GM10248 (cell line): ENCODE measurements at regions of chr6 and their contacts with region 1.

Region 1: GRCh38 chr6:42771741-42772100 is 10.1 kb upstream of the BICRAL start:
- DNase-seq: no peak
- CTCF ChIP-seq: no peak

Region 2: DNA sequence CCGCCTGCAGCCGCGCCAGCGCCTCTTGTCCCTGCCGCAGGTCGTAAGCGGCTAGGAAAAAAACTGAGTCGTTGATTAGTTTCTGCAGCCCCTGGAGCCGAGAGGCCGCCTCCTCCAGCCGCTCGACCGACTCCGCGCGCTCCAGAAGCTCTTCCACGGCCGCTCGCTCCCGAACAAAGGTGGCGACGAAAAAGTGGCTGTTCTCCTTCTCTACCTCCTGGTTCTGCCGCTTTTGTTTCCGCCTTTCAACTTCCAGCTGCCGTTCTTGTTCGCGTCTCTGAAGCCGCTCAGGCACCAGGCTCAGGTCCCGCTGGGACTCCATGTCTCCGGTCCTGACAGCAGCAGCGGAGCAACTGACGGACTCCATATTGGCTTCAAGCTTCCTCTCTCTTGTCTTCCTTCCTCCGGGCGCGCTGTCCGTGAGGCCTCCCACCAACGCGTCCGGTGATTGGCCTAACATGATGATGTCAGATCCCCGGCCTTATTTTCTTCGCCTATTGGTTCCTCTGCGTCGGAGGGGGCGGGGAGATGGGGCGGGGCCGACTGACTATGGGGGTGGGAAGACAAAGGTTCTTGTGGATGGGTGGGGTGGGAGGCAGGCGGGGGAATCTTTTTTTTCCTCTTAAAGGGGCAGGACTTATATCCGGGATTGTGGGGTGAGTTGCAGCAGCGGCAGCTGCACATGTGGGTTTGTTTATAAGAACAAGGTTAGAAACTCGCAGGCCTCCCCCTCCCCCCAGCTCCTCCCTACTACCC is 25.8 kb before region 1 on chr6 and contains the start of gene TBCC:
- CTCF ChIA-PET with region 1: interaction called, 26 read pairs
- POLR2A ChIA-PET with region 1: interaction called, 22 read pairs
- DNase-seq: peak; percentile 98
- CTCF ChIP-seq: no peak

Region 3: DNA sequence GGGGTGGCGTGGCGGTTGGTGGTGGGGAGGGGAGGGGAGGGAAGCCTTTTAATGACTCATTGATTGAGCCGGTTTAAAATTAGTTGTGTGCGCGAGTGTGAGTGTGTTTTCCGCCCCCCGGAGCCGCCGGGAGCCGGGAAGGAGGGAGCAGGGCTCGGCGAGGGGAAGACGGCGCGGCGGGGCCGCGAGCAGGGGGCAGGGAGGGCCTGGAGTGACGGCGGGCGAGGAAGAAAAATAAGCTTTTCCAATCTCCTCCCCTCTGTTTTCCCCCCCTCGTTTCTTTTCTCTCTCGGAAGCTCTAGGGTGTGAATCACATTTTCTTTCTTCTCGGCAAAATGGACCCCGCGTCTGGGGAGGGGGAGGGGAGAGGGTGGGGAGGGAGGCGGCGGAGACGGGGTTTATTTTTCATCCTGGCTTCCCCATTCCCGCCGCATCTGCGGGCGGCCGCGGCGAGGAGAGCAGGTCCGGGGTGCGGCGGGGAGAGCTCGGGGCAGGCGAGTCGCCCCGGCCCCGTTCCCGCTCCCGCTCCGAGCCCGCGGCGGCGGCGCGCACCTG is 11.0 kb after region 1 on chr6:
- CTCF ChIA-PET with region 1: interaction called, 4 read pairs
- POLR2A ChIA-PET with region 1: interaction called, 18 read pairs
- DNase-seq: peak; percentile 56
- CTCF ChIP-seq: no peak